Heart left ventricle (tissue), 16 donors: ENCODE measurements at regions of chr2 and their contacts with region 1.

Region 1: GRCh38 chr2:141015341-141016047 is 1115.3 kb downstream of the LRP1B start:
- DNase-seq: peak in 4 of 5 donors; percentile 41 to 64 (median 46)
- ATAC-seq: peak; percentile 96 to 99 (median 98)
- H3K4me3 ChIP-seq: no peak overlapping the region
- H3K27ac ChIP-seq: peak overlapping the region in 10 of 12 donors; percentile 3 to 69 (median 44)
- H3K4me1 ChIP-seq: peaks cover 0 to 8% (median 0%) of the 10 kb centered on the region in 12 donors
- H3K27me3 ChIP-seq: no peaks in the 10 kb centered on the region
- CTCF ChIP-seq: no peak
- POLR2A ChIP-seq: no peak

Region 2: GRCh38 chr2:141207036-141207385 is 191.5 kb after region 1 on chr2:
- intact Hi-C with region 1: loop called in 1 of 10 experiments (anchors 10 kb)
- DNase-seq: no peak
- ATAC-seq: peak in 3 of 4 donors; percentile 38 to 84 (median 76)
- H3K4me3 ChIP-seq: peak overlapping the region in 1 of 12 donors; percentile 7
- H3K27ac ChIP-seq: peak overlapping the region in 7 of 12 donors; percentile 0 to 73 (median 63)
- H3K4me1 ChIP-seq: peaks cover 0 to 4% (median 0%) of the 10 kb centered on the region in 12 donors
- H3K27me3 ChIP-seq: no peaks in the 10 kb centered on the region
- CTCF ChIP-seq: no peak
- POLR2A ChIP-seq: no peak